ENCODE measurements at regions of chr12 and their contacts with region 1.

Region 1: GRCh38 chr12:9906873-9907272 is 25.3 kb downstream of the CLEC2A start:
- DNase-seq: peak; percentile 55
- ATAC-seq: peak; percentile 98
- H3K4me3 Mint-ChIP-seq: peak overlapping the region; percentile 6
- H3K27ac Mint-ChIP-seq: peak overlapping the region; percentile 78
- H3K4me1 Mint-ChIP-seq: peaks cover 30% of the 10 kb centered on the region
- H3K27me3 Mint-ChIP-seq: no peaks in the 10 kb centered on the region
- CTCF ChIP-seq: no peak

Region 2: DNA sequence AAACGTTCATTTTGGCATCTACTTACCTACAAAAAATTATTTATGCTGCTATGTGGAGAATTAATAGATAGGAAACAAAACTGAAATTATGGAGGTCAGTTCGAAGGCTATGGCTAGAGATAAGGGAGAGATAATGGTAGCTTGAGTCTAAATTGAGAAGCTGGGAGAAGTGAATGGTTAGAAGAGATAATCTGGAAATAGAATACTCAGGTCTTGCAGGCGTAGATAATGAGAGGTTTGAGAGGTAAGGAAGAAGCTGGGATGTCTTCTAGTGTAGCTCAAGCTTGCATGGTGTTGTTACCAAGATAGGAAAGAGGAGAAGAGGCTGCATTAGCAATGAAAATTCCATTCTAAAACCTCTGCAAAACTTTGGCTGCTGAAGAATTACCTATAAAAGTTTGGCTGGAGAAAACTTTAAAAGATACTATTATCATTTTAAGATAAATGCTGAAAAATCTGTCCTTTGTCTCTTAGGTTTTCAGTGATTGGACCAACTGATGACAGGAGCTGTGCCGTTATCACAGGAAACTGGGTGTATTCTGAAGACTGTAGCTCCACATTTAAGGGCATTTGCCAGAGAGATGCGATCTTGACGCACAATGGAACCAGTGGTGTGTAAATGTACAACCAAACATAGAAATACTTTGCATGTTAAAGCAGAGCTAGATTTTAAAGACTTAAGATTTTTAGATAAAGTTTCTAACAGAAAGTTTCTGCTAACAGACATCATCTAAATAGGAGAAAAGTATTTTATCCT is 11.5 kb before region 1 on chr12:
- CTCF ChIA-PET with region 1: interaction called, 17 read pairs
- POLR2A ChIA-PET with region 1: interaction called, 3 read pairs
- intact Hi-C with region 1: no loop called
- DNase-seq: no peak
- ATAC-seq: no peak
- H3K4me3 Mint-ChIP-seq: no peak overlapping the region
- H3K27ac Mint-ChIP-seq: no peak overlapping the region
- H3K4me1 Mint-ChIP-seq: peaks cover 16% of the 10 kb centered on the region
- H3K27me3 Mint-ChIP-seq: no peaks in the 10 kb centered on the region
- CTCF ChIP-seq: no peak

Region 3: GRCh38 chr12:9925708-9926393 is 19.0 kb after region 1 on chr12:
- CTCF ChIA-PET with region 1: interaction called, 19 read pairs
- POLR2A ChIA-PET with region 1: interaction called, 9 read pairs
- intact Hi-C with region 1: no loop called
- DNase-seq: peak; percentile 7
- ATAC-seq: peak; percentile 73
- H3K4me3 Mint-ChIP-seq: peak overlapping the region; percentile 59
- H3K27ac Mint-ChIP-seq: peak overlapping the region; percentile 73
- H3K4me1 Mint-ChIP-seq: peaks cover 21% of the 10 kb centered on the region
- H3K27me3 Mint-ChIP-seq: no peaks in the 10 kb centered on the region
- CTCF ChIP-seq: peak; percentile 60

Measured in activated CD8-positive, alpha-beta T cell treated with anti-CD3 and anti-CD28 coated beads for 36 hours (primary cell).